ENCODE measurements at regions of chr5 and their contacts with region 1.

Region 1: GRCh38 chr5:141636413-141637122 is at the starts of genes HDAC3 and RELL2:
- DNase-seq: peak; percentile 89
- H3K4me3 ChIP-seq: peak within 1 kb of the TSS; percentile 83 to 86 (median 83)
- H3K27ac ChIP-seq: peak within 1 kb of the TSS; percentile 73
- H3K4me1 ChIP-seq: peaks cover 30% of the 10 kb centered on the region
- H3K27me3 ChIP-seq: no peaks in the 10 kb centered on the region
- CTCF ChIP-seq: no peak
- total RNA-seq, gene HDAC3: 57.7 to 61.5 TPM
- total RNA-seq, gene RELL2: 5.7 to 12.1 TPM

Region 2: DNA sequence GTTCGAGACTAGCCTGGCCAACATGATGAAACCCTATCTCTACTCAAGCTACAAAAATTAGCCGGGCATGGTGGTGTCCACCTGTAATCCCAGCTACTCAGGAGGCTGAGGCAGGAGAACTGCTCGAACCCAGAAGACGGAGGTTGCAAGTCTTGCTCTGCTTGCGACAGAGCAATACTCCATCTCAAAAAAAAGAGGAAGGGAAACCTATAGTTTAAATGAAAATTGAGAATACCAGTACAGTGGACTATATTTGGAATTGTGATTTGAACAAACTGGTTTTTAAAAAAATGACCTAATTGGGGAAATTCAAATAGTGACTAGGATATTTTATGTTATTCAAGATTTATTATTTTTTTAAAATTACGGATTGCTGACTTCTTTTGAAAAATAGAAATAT is 51.0 kb before region 1 on chr5:
- CTCF ChIA-PET with region 1: no interaction called
- dilution Hi-C with region 1: no loop called
- in situ Hi-C with region 1: loop called in 1 of 2 experiments (anchors 10 kb)
- intact Hi-C with region 1: no loop called
- DNase-seq: no peak
- H3K4me3 ChIP-seq: no peak overlapping the region
- H3K27ac ChIP-seq: no peak overlapping the region
- H3K4me1 ChIP-seq: no peaks in the 10 kb centered on the region
- H3K27me3 ChIP-seq: no peaks in the 10 kb centered on the region
- CTCF ChIP-seq: no peak

Region 3: GRCh38 chr5:141597394-141597793 is 39.2 kb before region 1 on chr5:
- CTCF ChIA-PET with region 1: interaction called, 11 read pairs
- dilution Hi-C with region 1: no loop called
- in situ Hi-C with region 1: no loop called
- intact Hi-C with region 1: no loop called
- DNase-seq: peak; percentile 39
- H3K4me3 ChIP-seq: no peak overlapping the region
- H3K27ac ChIP-seq: no peak overlapping the region
- H3K4me1 ChIP-seq: peaks cover 15% of the 10 kb centered on the region
- H3K27me3 ChIP-seq: no peaks in the 10 kb centered on the region
- CTCF ChIP-seq: no peak

Region 4: DNA sequence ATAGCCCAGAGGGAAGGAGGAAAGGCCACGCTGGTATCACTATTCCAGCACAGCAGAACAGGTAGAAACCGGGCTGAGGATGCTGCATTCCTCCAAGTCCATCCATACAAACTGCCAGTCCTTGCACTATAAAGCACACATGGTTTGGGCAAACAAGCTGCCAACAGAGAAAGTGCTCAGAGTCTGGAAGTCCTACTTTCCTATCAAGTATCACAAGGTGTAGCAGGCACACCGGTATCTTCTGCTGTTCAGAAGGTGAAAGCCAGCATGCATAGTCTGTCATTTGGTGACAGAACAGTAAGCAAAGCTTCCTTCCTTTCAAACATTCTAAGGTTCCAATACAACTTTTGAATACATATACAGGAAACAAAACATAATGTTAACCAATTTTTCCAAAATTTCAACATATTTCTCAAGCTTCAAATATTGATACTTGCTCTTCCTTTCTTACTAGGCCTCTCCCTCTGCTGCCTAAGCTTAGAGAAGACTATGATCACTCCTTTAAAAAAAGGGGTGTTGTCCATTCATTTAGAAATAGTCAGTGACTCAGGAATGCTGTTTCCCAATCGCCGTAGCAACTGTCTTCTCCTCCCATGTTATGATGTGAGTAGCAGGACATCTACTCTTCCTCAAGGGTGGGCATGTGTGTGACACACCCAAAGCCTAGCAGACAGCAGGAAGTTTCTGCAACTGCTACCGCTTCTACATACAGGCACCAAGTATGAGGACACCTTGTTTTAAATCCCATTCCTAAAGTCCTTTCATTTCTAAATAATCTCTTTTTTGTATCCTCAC is 32.4 kb before region 1 on chr5:
- CTCF ChIA-PET with region 1: no interaction called
- dilution Hi-C with region 1: no loop called
- in situ Hi-C with region 1: no loop called
- intact Hi-C with region 1: loop called (anchors 1 kb)
- DNase-seq: peak; percentile 93
- H3K4me3 ChIP-seq: peak overlapping the region in 1 of 3 experiments; percentile 27
- H3K27ac ChIP-seq: peak overlapping the region; percentile 98
- H3K4me1 ChIP-seq: peaks cover 18% of the 10 kb centered on the region
- H3K27me3 ChIP-seq: no peaks in the 10 kb centered on the region
- CTCF ChIP-seq: no peak

Region 5: DNA sequence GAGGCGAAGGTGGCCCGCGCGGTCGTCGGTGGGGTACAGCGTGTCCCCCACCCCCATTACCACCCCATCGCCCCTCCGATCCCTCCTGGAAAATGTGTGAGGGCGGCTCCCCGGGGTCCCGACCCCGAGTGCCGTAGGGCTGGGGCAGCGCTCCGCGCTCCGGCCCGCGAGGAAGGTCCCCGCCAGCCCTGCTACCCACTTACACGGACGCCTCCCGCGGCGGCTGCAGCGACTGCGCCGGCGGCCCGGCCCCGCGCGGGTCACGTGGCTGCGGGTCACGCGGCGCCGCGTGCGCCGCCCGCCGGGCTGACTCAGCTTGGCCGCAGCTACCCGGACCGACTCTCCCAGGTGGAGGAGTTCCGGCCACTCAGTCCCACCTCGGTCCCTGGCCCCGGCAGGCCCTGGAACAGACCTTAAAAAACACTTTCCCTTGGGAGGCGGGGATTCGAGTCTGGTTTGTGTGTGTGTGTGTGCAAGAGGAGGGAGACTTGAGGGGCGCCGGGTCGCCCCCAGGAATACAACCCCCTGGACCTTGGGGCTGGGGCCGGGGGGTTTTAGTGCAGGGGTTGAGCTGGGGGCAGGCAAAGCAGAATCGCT is 376.3 kb after region 1 on chr5 and contains the start of gene GNPDA1:
- CTCF ChIA-PET with region 1: no interaction called
- dilution Hi-C with region 1: no loop called
- in situ Hi-C with region 1: no loop called
- intact Hi-C with region 1: no loop called
- DNase-seq: peak; percentile 71
- H3K4me3 ChIP-seq: peak within 1 kb of the TSS; percentile 69 to 84 (median 69)
- H3K27ac ChIP-seq: peak within 1 kb of the TSS; percentile 53
- H3K4me1 ChIP-seq: peaks cover 31% of the 10 kb centered on the region
- H3K27me3 ChIP-seq: no peaks in the 10 kb centered on the region
- CTCF ChIP-seq: no peak
- total RNA-seq, gene GNPDA1: 29.0 to 77.2 TPM

Region 6: DNA sequence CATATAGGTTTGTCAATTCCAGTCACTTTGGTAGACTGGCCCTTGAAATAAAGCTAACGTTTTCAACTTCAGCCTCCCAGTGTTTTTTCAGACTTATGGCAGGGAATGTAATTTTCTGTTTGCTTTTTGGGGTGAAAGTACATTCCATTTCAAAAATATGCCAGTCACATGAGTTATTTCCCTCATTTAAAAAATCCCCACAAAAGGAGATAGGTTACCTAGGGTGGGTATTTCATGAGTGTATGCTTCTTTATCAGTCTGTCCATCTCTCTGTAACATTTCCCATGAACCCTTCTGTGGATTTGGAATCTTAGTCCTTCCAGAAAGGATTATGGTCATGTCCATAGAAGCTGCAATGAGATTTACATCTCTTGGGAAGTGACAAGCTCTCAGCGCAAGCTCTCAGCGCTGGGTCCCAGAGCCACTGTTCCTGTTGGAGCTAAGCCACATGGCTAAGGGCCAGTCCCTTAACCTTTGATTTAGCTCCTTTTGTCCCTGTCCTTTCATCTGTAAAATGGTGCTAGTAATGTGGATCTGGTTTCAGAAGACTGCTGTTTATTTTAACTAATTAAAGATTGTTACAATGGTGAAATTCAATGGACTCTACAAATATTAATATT is 1472.0 kb after region 1 on chr5:
- CTCF ChIA-PET with region 1: no interaction called
- dilution Hi-C with region 1: no loop called
- in situ Hi-C with region 1: no loop called
- intact Hi-C with region 1: no loop called
- DNase-seq: no peak
- H3K4me3 ChIP-seq: no peak overlapping the region
- H3K27ac ChIP-seq: no peak overlapping the region
- H3K4me1 ChIP-seq: no peaks in the 10 kb centered on the region
- H3K27me3 ChIP-seq: no peaks in the 10 kb centered on the region
- CTCF ChIP-seq: no peak